ENCODE measurements at regions of chr6 and their contacts with region 1.

Region 1: GRCh38 chr6:31609519-31610406 is 5.3 kb upstream of the AIF1 start:
- DNase-seq: no peak
- H3K4me3 ChIP-seq: no peak overlapping the region
- H3K4me3 Mint-ChIP-seq: no peak overlapping the region
- H3K27ac ChIP-seq: no peak overlapping the region
- H3K27ac Mint-ChIP-seq: no peak overlapping the region
- H3K4me1 ChIP-seq: no peaks in the 10 kb centered on the region
- H3K4me1 Mint-ChIP-seq: peaks cover 0 to 4% (median 2%) of the 10 kb centered on the region in 4 donors
- H3K27me3 ChIP-seq: no peaks in the 10 kb centered on the region
- H3K27me3 Mint-ChIP-seq: no peaks in the 10 kb centered on the region

Region 2: GRCh38 chr6:31597006-31597405 is 12.8 kb before region 1 on chr6:
- CTCF ChIA-PET with region 1: interaction called, 25 read pairs
- POLR2A ChIA-PET with region 1: no interaction called
- intact Hi-C with region 1: no loop called
- DNase-seq: peak; percentile 66 to 79 (median 75)
- H3K4me3 ChIP-seq: no peak overlapping the region
- H3K4me3 Mint-ChIP-seq: peak overlapping the region in 5 of 8 donors; percentile 33 to 66 (median 43)
- H3K27ac ChIP-seq: no peak overlapping the region
- H3K27ac Mint-ChIP-seq: peak overlapping the region; percentile 60 to 89 (median 77)
- H3K4me1 ChIP-seq: peaks cover 60% of the 10 kb centered on the region
- H3K4me1 Mint-ChIP-seq: peaks cover 27 to 56% (median 45%) of the 10 kb centered on the region in 4 donors
- H3K27me3 ChIP-seq: no peaks in the 10 kb centered on the region
- H3K27me3 Mint-ChIP-seq: no peaks in the 10 kb centered on the region